ENCODE measurements at regions of chr12 and their contacts with region 1.

Region 1: DNA sequence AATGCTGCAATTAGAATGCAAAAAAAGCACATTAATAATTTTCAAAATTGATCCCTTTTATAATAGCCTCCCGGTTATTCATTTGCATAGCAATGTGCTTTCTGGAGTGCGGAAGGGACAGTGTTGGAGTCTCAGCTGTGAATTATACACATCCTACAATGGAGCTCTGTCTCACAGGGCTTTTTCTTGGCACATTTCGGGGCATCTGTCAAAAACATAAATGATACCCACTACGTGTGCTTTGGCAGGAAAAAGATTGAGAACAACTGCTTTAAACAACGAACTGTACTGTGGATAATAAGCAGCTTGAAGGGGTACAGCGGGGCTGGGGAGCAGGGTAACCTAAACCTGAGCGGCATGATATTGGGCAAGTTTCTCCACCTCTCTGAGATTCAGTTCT is 123.1 kb downstream of the PAH start:
- DNase-seq: no peak
- H3K27ac ChIP-seq: no peak overlapping the region
- CTCF ChIP-seq: no peak

Region 2: GRCh38 chr12:104372061-104372720 is 1578.3 kb after region 1 on chr12:
- CTCF ChIA-PET with region 1: no interaction called
- POLR2A ChIA-PET with region 1: interaction called, 11 read pairs
- DNase-seq: no peak
- H3K27ac ChIP-seq: no peak overlapping the region
- CTCF ChIP-seq: no peak

Measured in RWPE1 (cell line).